Caco-2 (cell line): ENCODE measurements at regions of chr10 and their contacts with region 1.

Region 1: GRCh38 chr10:3785257-3785850 is 345 bp upstream of the KLF6 start:
- DNase-seq: peak; percentile 99 to 100
- H3K4me3 ChIP-seq: peak overlapping the region; percentile 96
- H3K4me3 Mint-ChIP-seq: peak overlapping the region; percentile 91
- H3K27ac Mint-ChIP-seq: peak overlapping the region; percentile 98
- H3K4me1 ChIP-seq: peaks cover 47% of the 10 kb centered on the region
- H3K4me1 Mint-ChIP-seq: peaks cover 35% of the 10 kb centered on the region
- H3K27me3 ChIP-seq: no peaks in the 10 kb centered on the region
- H3K27me3 Mint-ChIP-seq: no peaks in the 10 kb centered on the region
- CTCF ChIP-seq: no peak

Region 2: DNA sequence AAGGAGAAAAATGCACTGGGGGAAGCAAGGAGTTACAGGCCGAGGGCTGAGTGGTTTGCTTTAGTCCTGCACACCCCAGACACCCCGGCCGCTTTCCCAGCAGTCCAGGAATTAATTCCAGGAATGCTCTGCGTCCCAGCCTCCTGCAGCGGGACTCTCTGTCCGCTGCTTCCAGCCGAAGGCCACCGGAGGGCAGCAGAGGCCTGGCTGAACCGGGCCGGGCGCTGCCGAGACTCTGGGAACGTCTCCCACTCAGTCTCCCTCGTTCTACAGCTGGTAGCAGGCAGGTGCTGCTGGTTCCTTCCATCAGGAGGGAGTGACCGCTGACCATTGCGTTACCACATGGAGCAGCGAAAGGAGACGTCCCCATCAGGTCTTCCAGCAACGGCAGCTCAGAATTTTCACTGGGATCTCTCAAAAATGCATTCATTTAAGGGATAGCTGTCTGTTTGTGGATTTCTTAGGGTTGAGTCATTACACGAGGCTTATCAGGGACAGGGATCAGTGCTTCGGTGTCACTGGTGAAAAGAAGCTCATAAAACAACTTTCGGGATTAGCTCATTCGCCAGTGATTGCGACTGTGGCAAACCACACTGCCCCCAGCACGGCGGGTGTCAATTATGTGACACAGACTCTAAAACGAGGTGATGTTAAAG is 587.9 kb before region 1 on chr10:
- CTCF ChIA-PET with region 1: no interaction called
- POLR2A ChIA-PET with region 1: no interaction called
- intact Hi-C with region 1: loop called (anchors 5 kb)
- DNase-seq: peak; percentile 89 to 92
- H3K4me3 ChIP-seq: peak overlapping the region; percentile 9
- H3K4me3 Mint-ChIP-seq: peak overlapping the region; percentile 75
- H3K27ac Mint-ChIP-seq: peak overlapping the region; percentile 66
- H3K4me1 ChIP-seq: no peaks in the 10 kb centered on the region
- H3K4me1 Mint-ChIP-seq: peaks cover 9% of the 10 kb centered on the region
- H3K27me3 ChIP-seq: no peaks in the 10 kb centered on the region; the same call in 1 of the 2 replicates
- H3K27me3 Mint-ChIP-seq: peaks cover 6% of the 10 kb centered on the region
- CTCF ChIP-seq: peak; percentile 92 to 99

Region 3: DNA sequence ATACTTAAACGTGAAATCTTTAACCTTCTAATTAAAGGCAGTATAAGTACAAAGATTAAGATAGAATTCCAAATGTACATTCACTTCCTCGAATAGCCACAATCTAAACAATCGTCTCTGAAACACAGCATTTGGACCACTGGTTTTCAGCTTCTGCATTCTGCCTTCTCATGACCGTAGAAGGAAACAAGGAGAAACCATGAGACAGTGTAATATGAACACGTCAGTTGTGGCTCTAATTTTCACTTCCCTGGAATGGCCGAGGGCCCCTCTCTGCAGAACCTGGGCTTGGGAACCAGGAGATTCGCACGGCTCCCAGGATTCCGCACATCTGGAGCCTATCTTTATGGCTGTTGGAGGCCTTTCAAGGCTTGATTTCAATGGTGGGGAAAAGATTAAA is 189.6 kb before region 1 on chr10:
- CTCF ChIA-PET with region 1: no interaction called
- POLR2A ChIA-PET with region 1: no interaction called
- intact Hi-C with region 1: loop called (anchors 5 kb)
- DNase-seq: no peak
- H3K4me3 ChIP-seq: no peak overlapping the region
- H3K4me3 Mint-ChIP-seq: no peak overlapping the region
- H3K27ac Mint-ChIP-seq: peak overlapping the region; percentile 79
- H3K4me1 ChIP-seq: peaks cover 15% of the 10 kb centered on the region
- H3K4me1 Mint-ChIP-seq: peaks cover 14% of the 10 kb centered on the region
- H3K27me3 ChIP-seq: no peaks in the 10 kb centered on the region
- H3K27me3 Mint-ChIP-seq: no peaks in the 10 kb centered on the region
- CTCF ChIP-seq: no peak

Region 4: GRCh38 chr10:3754727-3755439 is 30.5 kb before region 1 on chr10:
- CTCF ChIA-PET with region 1: no interaction called
- POLR2A ChIA-PET with region 1: interaction called, 14 read pairs
- intact Hi-C with region 1: no loop called
- DNase-seq: peak; percentile 64 to 76
- H3K4me3 ChIP-seq: no peak overlapping the region
- H3K4me3 Mint-ChIP-seq: peak overlapping the region; percentile 60
- H3K27ac Mint-ChIP-seq: peak overlapping the region; percentile 91
- H3K4me1 ChIP-seq: peaks cover 64% of the 10 kb centered on the region
- H3K4me1 Mint-ChIP-seq: peaks cover 49% of the 10 kb centered on the region
- H3K27me3 ChIP-seq: no peaks in the 10 kb centered on the region
- H3K27me3 Mint-ChIP-seq: no peaks in the 10 kb centered on the region
- CTCF ChIP-seq: no peak

Region 5: DNA sequence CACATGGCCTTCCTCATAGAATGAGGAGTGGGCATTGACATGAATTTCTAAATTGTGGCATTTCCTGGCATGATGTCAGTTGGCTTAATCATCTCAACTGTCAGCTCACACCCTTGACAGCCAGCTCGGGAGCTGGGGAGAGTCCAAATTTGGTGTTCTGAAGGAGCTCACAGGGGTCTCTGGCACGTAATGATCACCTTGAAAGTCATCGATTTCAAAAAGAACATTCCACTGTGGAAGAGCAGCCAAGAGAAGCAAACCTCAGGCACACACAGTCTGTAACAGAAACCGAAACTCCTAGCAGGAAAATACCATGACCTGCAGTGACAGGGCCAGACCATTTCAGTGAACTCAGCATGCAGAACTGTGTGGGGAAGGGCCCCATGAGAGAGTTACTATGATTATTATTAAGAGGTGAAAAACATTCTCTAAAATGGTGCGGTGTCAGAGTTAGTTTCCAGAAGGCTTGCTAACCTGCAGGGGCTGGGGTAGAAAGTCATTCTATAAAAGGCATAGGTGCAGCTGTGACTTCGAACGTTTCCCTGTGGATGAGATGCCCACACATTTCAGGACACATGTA is 26.0 kb after region 1 on chr10:
- CTCF ChIA-PET with region 1: interaction called, 10 read pairs
- POLR2A ChIA-PET with region 1: interaction called, 109 read pairs
- intact Hi-C with region 1: loop called (anchors 1 kb)
- DNase-seq: no peak
- H3K4me3 ChIP-seq: no peak overlapping the region
- H3K4me3 Mint-ChIP-seq: peak overlapping the region; percentile 20
- H3K27ac Mint-ChIP-seq: peak overlapping the region; percentile 84
- H3K4me1 ChIP-seq: peaks cover 73% of the 10 kb centered on the region
- H3K4me1 Mint-ChIP-seq: peaks cover 67% of the 10 kb centered on the region
- H3K27me3 ChIP-seq: no peaks in the 10 kb centered on the region
- H3K27me3 Mint-ChIP-seq: no peaks in the 10 kb centered on the region
- CTCF ChIP-seq: no peak

Region 6: GRCh38 chr10:3887885-3888476 is 102.6 kb after region 1 on chr10:
- CTCF ChIA-PET with region 1: no interaction called
- POLR2A ChIA-PET with region 1: interaction called, 16 read pairs
- intact Hi-C with region 1: loop called (anchors 1 kb)
- DNase-seq: peak; percentile 77 to 89
- H3K4me3 ChIP-seq: no peak overlapping the region
- H3K4me3 Mint-ChIP-seq: peak overlapping the region; percentile 63
- H3K27ac Mint-ChIP-seq: peak overlapping the region; percentile 96
- H3K4me1 ChIP-seq: peaks cover 70% of the 10 kb centered on the region
- H3K4me1 Mint-ChIP-seq: peaks cover 61% of the 10 kb centered on the region
- H3K27me3 ChIP-seq: no peaks in the 10 kb centered on the region
- H3K27me3 Mint-ChIP-seq: no peaks in the 10 kb centered on the region
- CTCF ChIP-seq: no peak